HCT116 (cell line): ENCODE measurements at regions of chr12 and their contacts with region 1.

Region 1: DNA sequence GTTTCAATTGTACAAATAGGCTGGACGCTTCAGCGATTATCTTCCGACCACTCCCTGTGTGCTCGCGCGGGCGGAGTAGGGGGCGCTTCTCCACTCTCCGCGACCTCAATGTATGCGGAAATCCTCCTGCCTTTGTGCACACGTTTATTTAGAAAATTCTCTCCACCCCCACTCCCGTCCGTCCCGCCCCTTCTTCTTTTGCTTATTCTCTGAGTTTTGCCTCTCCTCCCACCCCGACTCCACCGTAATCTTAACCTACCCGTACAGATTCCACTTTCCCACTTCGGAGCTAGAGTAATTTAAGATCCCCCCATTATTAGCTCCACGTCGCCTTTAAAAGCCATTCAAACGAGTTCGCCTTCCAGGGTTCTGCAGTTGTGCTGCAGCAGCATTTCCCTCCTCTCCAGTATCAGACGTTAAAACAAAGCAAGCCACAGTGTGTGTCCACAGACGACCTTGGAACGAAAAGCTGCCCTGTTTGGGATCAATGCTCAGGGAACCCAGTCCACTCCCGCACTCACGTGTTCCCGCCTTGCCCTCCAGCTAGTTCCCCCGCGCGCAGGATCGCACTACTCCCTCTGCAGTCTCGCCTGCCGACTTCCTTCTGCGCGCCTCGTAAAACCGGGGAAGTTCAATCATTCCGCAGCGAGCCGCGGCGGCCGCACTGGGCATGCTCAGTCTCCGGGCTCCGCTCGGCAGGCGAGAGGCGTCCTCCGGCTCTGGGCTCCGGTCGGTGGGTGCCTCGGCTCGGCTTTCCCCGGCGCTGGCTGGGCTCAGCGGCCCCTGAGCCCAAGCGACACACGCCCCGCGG is at the start of gene ANO6:
- DNase-seq: peak; percentile 78
- ATAC-seq: peak; percentile 84
- H3K4me3 ChIP-seq: peak within 1 kb of the TSS; percentile 79
- H3K27ac ChIP-seq: peak within 1 kb of the TSS; percentile 98
- H3K4me1 ChIP-seq: peaks cover 9 to 19% of the 10 kb centered on the region in 2 experiments; a peak in 3 of 4 replicates
- H3K27me3 ChIP-seq: no peaks in the 10 kb centered on the region
- CTCF ChIP-seq: peak in 2 of 3 experiments; percentile 6 to 14; a peak in 1 of 6 replicates
- POLR2A ChIP-seq: peak; percentile 64
- RAD21 ChIP-seq: no peak; the same call in 1 of the 2 replicates
- total RNA-seq, gene ANO6: 36.7 TPM

Region 2: DNA sequence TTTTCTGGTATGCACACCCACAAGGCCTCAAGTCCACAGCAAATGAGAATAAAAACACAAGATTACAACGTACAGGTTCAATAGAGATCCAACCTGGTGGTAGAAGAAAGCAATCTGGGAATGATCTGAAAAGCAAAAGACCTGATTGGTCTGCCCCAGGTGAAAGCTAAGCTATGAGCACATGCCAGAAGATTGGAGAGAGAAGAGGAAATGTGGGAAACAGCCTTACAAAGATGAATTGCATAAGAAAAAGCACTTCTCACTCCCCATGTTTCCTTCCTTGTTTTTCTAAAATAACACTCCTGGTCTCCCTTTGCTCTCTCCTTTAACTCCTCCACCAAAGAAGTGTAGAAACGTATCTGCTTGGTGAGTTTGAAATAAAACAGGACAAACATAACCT is 77.0 kb before region 1 on chr12:
- CTCF ChIA-PET with region 1: no interaction called
- POLR2A ChIA-PET with region 1: no interaction called
- RAD21 ChIA-PET with region 1: no interaction called
- intact Hi-C with region 1: no loop called
- DNase-seq: no peak
- ATAC-seq: no peak
- H3K4me3 ChIP-seq: no peak overlapping the region
- H3K27ac ChIP-seq: no peak overlapping the region
- H3K4me1 ChIP-seq: no peaks in the 10 kb centered on the region
- H3K27me3 ChIP-seq: no peaks in the 10 kb centered on the region
- CTCF ChIP-seq: no peak
- POLR2A ChIP-seq: no peak
- RAD21 ChIP-seq: no peak

Region 3: DNA sequence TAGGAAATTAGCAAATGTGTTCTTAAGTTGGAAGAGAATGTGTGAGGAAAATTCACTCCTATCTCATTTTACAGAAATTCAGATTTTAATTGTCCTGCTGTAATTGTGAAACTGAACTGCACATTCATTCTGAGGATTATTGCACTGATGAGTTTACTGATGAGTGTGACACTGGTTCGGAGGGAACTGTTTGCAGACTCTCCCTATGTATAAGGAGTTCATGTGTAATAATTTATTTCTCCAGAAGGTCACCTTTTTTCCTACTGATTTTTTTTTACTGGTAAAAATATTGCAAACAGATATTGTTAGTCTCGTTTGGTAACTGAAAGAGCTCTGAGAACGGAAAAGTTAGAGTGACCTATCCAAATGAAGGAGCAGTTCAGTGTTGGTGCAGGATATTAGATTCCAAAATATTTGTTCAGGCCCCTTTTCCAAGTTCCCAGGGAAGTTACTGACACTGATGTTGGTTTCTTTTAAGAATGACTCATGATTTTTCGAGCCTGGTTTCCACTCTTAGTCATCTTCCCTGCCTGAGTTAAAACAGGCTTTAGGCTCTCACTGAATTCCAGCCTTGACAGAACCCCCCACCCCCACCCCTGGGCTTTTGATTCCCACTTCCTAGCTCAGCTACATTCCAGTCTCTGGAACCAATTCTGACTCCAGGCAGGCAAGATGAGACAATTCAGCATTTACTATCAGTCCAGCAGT is 18.7 kb after region 1 on chr12:
- CTCF ChIA-PET with region 1: interaction called, 5 read pairs
- POLR2A ChIA-PET with region 1: interaction called, 6 read pairs
- RAD21 ChIA-PET with region 1: no interaction called
- intact Hi-C with region 1: loop called (anchors 2 kb)
- DNase-seq: peak; percentile 88
- ATAC-seq: peak; percentile 67
- H3K4me3 ChIP-seq: peak overlapping the region; percentile 15 to 47
- H3K27ac ChIP-seq: peak overlapping the region; percentile 60
- H3K4me1 ChIP-seq: peaks cover 57 to 62% of the 10 kb centered on the region in 2 experiments
- H3K27me3 ChIP-seq: no peaks in the 10 kb centered on the region
- CTCF ChIP-seq: no peak
- POLR2A ChIP-seq: no peak
- RAD21 ChIP-seq: no peak

Region 4: DNA sequence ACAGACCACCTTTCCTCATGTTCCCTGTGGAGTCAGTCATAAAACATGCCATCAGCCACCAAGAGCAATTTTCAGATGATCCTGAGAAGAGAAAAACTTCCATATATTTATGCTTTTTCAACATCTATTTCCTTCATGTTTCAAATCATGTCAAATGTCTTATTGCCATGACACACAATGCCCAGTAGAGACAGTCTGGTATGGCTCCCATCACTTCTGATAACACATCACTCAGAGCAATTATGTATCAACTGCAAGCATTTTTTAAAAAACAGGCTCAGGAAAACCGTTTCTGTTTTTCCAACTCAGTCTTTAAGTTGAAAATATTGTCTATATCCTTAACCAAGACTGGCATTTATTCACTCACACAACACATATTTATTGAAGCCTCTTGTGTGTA is 284.5 kb after region 1 on chr12:
- CTCF ChIA-PET with region 1: no interaction called
- POLR2A ChIA-PET with region 1: no interaction called
- RAD21 ChIA-PET with region 1: no interaction called
- intact Hi-C with region 1: no loop called
- DNase-seq: no peak
- ATAC-seq: no peak
- H3K4me3 ChIP-seq: no peak overlapping the region
- H3K27ac ChIP-seq: no peak overlapping the region
- H3K4me1 ChIP-seq: no peaks in the 10 kb centered on the region
- H3K27me3 ChIP-seq: no peaks in the 10 kb centered on the region
- CTCF ChIP-seq: no peak
- POLR2A ChIP-seq: no peak
- RAD21 ChIP-seq: no peak